Heart left ventricle (tissue), 16 donors: ENCODE measurements at regions of chr2 and their contacts with region 1.

Region 1: GRCh38 chr2:186256540-186256939 is 229.5 kb upstream of the ZC3H15 start:
- DNase-seq: no peak
- ATAC-seq: peak in 1 of 4 donors; percentile 32
- H3K4me3 ChIP-seq: no peak overlapping the region
- H3K27ac ChIP-seq: no peak overlapping the region
- H3K4me1 ChIP-seq: no peaks in the 10 kb centered on the region
- H3K27me3 ChIP-seq: no peaks in the 10 kb centered on the region
- CTCF ChIP-seq: peak in 11 of 12 donors; percentile 20 to 68 (median 48)
- POLR2A ChIP-seq: no peak

Region 2: GRCh38 chr2:185291035-185291647 is 965.4 kb before region 1 on chr2:
- intact Hi-C with region 1: loop called in 2 of 10 experiments (anchors 5 to 10 kb)
- DNase-seq: peak in 1 of 5 donors; percentile 29
- ATAC-seq: peak in 2 of 4 donors; percentile 45 to 65
- H3K4me3 ChIP-seq: no peak overlapping the region
- H3K27ac ChIP-seq: no peak overlapping the region
- H3K4me1 ChIP-seq: no peaks in the 10 kb centered on the region
- H3K27me3 ChIP-seq: no peaks in the 10 kb centered on the region
- CTCF ChIP-seq: peak in 10 of 12 donors; percentile 23 to 63 (median 38)
- POLR2A ChIP-seq: no peak

Region 3: DNA sequence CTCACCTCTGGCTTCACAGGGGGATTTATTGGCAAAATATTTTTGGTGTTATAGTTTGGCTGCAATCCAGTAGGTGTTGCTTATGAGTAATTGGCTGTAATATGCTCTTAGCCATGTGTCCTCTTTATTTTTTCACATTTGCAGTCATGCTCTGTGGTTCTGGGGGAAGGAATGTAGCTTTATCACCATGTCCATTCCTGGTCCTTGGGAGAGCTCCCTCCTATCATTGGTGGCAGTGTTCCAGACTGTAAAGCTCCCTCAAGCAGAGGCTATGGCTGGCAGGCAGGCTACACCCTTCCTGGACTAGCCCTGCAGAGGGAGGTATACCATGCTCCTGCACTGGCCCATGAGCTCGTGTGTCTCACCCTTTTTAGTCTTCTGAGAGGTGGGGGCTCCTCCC is 637.9 kb before region 1 on chr2:
- intact Hi-C with region 1: loop called in 1 of 10 experiments (anchors 10 kb)
- DNase-seq: no peak
- ATAC-seq: no peak
- H3K4me3 ChIP-seq: no peak overlapping the region
- H3K27ac ChIP-seq: no peak overlapping the region
- H3K4me1 ChIP-seq: no peaks in the 10 kb centered on the region
- H3K27me3 ChIP-seq: no peaks in the 10 kb centered on the region
- CTCF ChIP-seq: no peak
- POLR2A ChIP-seq: no peak

Region 4: DNA sequence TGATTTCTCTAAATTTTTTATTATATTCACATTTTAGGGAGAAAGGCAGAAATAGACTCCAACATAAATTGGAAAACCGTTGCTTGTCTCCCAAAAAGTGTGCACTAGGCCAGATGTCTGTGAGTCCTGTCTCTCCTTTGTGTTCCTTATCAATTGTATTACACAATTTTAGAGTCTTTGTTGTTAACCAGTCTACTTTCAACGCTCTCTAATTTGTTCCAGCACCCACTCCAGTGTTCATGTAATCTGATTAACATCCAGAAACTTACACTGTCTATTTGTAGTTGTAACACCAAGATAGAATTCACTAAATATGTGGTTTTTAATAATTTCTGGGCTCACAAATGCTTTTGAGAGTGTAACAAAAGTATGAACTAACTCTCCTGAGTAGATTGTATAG is 322.3 kb before region 1 on chr2:
- intact Hi-C with region 1: no loop called
- DNase-seq: no peak
- ATAC-seq: no peak
- H3K4me3 ChIP-seq: no peak overlapping the region
- H3K27ac ChIP-seq: no peak overlapping the region
- H3K4me1 ChIP-seq: no peaks in the 10 kb centered on the region
- H3K27me3 ChIP-seq: no peaks in the 10 kb centered on the region
- CTCF ChIP-seq: no peak
- POLR2A ChIP-seq: no peak

Region 5: DNA sequence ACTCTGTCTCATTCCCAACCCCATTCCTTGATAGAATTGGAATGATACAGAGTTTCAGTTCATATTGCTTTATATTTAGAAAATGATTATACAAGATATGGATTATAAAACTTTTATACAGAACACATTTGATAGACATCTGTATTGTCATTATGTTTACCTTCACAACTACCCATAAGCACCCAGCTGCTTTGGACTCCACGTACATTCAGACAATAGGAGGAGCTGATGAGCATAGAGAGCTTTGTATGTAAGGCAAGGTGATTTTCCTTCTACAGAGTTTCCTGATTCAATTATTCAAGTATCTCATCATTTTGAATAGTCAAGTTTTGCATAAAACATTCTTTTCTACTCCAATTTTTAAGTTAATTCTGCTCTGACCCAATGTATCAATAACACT is 89.4 kb before region 1 on chr2:
- intact Hi-C with region 1: no loop called
- DNase-seq: no peak
- ATAC-seq: no peak
- H3K4me3 ChIP-seq: no peak overlapping the region
- H3K27ac ChIP-seq: no peak overlapping the region
- H3K4me1 ChIP-seq: no peaks in the 10 kb centered on the region
- H3K27me3 ChIP-seq: no peaks in the 10 kb centered on the region
- CTCF ChIP-seq: no peak
- POLR2A ChIP-seq: no peak

Region 6: DNA sequence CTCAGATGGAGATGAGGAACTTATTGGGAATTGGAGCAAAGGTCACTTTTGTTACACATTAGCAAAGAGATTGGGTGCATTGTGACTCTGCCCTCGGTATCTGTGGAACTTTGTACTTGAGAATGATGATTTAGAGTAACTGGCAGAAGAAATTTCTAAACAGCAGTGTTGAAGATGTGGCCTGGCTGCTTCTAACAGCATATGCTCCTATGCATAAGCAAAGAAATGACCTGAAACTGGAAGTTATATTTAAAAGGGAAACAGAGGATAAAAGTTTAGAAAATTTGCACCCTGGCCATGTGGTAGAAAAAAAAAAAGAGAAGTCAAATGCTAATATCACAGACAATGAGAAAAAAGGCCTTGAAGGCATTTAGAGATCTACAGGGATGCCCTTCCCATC is 27.3 kb before region 1 on chr2:
- intact Hi-C with region 1: no loop called
- DNase-seq: no peak
- ATAC-seq: no peak
- H3K4me3 ChIP-seq: no peak overlapping the region
- H3K27ac ChIP-seq: no peak overlapping the region
- H3K4me1 ChIP-seq: no peaks in the 10 kb centered on the region
- H3K27me3 ChIP-seq: no peaks in the 10 kb centered on the region
- CTCF ChIP-seq: no peak
- POLR2A ChIP-seq: no peak